ENCODE measurements at regions of chr19 and their contacts with region 1.

Region 1: GRCh38 chr19:2391118-2391725 is 31.2 kb downstream of the TMPRSS9 start:
- DNase-seq: peak; percentile 48
- H3K4me3 ChIP-seq: no peak overlapping the region
- H3K27ac ChIP-seq: no peak overlapping the region
- H3K4me1 ChIP-seq: no peaks in the 10 kb centered on the region
- H3K27me3 ChIP-seq: no peaks in the 10 kb centered on the region
- CTCF ChIP-seq: peak; percentile 64

Region 2: GRCh38 chr19:2168619-2169424 is 222.4 kb before region 1 on chr19:
- intact Hi-C with region 1: loop called (anchors 5 kb)
- DNase-seq: peak; percentile 95
- H3K4me3 ChIP-seq: peak overlapping the region; percentile 4
- H3K27ac ChIP-seq: peak overlapping the region; percentile 90
- H3K4me1 ChIP-seq: peaks cover 39% of the 10 kb centered on the region
- H3K27me3 ChIP-seq: no peaks in the 10 kb centered on the region
- CTCF ChIP-seq: no peak

Region 3: DNA sequence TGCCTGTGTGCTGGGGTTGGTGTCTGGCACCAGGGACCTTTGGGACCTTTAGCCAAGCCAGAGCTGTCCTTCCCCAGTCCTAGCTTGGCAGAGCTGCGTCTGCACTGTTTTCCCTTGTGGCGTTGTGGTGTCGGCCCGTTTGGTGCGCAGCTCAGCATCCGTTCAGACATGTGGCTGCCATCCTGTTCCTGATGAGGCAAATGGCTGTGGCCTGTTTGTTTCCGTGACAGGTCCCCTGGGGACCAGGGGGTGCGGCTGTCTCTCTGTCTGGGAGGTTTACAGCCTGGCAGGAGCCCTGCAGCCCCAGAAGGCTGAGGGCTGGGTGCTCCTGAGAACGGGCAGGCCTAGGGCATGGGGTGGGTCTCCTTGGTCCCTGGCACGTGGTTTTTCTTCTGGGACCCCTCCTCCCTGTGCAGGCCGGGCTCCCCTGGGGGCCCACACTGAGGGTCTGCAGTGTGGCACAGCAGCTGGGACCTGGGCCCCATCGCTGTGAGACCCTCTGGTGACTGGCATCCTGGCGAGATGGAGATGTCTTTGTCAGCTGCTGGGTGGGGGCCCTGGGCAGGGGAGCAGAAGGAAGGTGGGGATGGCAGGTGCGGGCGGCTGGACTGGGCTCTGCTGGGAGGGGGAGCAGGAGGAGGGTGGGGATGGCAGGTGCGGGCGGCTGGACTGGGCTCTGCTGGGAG is 58.7 kb before region 1 on chr19:
- intact Hi-C with region 1: loop called (anchors 5 kb)
- DNase-seq: peak; percentile 65
- H3K4me3 ChIP-seq: no peak overlapping the region
- H3K27ac ChIP-seq: peak overlapping the region; percentile 92
- H3K4me1 ChIP-seq: peaks cover 24% of the 10 kb centered on the region
- H3K27me3 ChIP-seq: no peaks in the 10 kb centered on the region
- CTCF ChIP-seq: no peak

Region 4: DNA sequence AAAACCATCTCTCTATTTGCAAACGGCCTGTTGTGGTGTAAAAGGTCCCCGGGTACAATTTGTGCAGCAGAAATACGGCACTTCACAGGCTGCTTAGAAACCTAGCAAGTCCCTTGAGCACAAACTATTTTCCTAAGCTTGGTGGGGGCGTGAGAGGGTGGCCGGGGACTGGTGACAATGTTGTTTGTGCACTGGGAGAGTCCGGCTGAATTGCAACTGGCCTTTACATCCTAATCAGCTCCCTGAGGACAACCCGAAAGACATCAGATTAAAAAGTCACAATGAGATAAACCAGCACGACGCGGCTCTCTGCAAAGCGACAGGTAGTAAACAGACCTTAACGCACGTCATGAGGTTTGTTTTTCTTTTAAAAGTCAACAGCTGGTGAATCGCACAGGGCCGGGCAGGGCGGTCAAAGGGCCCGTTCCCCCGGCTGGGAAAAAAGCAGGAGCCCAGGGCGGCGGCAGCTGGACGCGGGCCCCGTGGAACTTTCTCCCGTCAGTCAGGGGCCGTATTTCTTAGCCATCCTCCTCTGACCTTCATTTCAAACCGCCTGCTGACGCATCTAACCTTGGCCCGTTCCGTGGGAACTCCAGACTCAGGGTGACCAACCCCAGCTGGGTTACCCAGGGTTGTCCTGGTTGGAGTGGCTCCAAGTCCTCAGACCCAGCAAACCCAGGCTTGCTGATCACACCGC is 197.0 kb after region 1 on chr19:
- intact Hi-C with region 1: no loop called
- DNase-seq: peak; percentile 70
- H3K4me3 ChIP-seq: no peak overlapping the region
- H3K27ac ChIP-seq: no peak overlapping the region
- H3K4me1 ChIP-seq: peaks cover 4% of the 10 kb centered on the region
- H3K27me3 ChIP-seq: no peaks in the 10 kb centered on the region
- CTCF ChIP-seq: no peak

Measured in colonic mucosa (tissue), 4 donors.